HepG2 (cell line): ENCODE measurements at regions of chr12 and their contacts with region 1.

Region 1: GRCh38 chr12:24039113-24039525 is 89.6 kb upstream of the SOX5 start:
- DNase-seq: peak; percentile 96
- ATAC-seq: peak; percentile 81
- H3K4me3 ChIP-seq: peak overlapping the region in 2 of 3 experiments; percentile 62 to 65; a peak in 3 of 6 replicates
- H3K27ac ChIP-seq: peak overlapping the region; percentile 94
- H3K4me1 ChIP-seq: peaks cover 94% of the 10 kb centered on the region
- H3K27me3 ChIP-seq: no peaks in the 10 kb centered on the region
- CTCF ChIP-seq: no peak
- EP300 ChIP-seq: peak in 1 of 2 experiments; percentile 96; a peak in 2 of 4 replicates
- POLR2A ChIP-seq: no peak
- RAD21 ChIP-seq: no peak

Region 2: DNA sequence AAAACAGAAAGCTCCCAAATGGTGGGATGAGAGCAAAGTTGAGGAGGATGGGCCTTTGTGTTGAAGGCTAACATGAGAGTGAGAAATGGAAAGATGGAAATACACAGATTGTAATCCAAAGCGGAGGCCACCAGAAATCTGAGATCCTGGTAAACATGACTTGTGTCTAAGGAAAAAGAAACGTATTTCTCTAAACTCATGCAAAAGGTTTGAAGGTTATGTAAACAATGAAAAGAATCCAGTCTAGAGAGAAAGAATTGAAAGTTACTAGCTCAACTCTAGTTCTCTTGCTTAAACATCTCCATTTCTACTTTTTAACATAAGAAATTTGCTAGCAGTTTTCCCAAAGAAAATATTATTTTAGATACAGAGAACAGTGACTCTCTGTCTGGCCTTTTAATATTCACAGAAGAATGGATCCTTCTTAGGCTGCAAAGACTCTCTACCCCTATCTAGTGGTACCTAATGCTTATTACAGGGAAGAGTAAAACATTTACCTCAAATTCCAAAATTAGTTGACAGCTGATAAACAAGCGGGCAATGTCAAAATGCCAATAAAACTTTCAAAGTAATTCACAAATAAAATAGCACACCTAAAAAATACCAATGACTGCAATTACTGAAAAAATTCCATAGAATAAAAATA is 13.8 kb before region 1 on chr12:
- CTCF ChIA-PET with region 1: no interaction called
- POLR2A ChIA-PET with region 1: interaction called, 5 read pairs
- in situ Hi-C with region 1: no loop called
- intact Hi-C with region 1: loop called (anchors 2 kb)
- DNase-seq: peak; percentile 84
- ATAC-seq: peak; percentile 87
- H3K4me3 ChIP-seq: peak overlapping the region in 2 of 3 experiments; percentile 50 to 53; a peak in 2 of 6 replicates
- H3K27ac ChIP-seq: peak overlapping the region; percentile 72
- H3K4me1 ChIP-seq: peaks cover 71% of the 10 kb centered on the region
- H3K27me3 ChIP-seq: no peaks in the 10 kb centered on the region; a peak in 1 of 5 replicates
- CTCF ChIP-seq: peak; percentile 54
- EP300 ChIP-seq: peak in 1 of 2 experiments; percentile 74; a peak in 2 of 4 replicates
- POLR2A ChIP-seq: no peak
- RAD21 ChIP-seq: no peak

Region 3: DNA sequence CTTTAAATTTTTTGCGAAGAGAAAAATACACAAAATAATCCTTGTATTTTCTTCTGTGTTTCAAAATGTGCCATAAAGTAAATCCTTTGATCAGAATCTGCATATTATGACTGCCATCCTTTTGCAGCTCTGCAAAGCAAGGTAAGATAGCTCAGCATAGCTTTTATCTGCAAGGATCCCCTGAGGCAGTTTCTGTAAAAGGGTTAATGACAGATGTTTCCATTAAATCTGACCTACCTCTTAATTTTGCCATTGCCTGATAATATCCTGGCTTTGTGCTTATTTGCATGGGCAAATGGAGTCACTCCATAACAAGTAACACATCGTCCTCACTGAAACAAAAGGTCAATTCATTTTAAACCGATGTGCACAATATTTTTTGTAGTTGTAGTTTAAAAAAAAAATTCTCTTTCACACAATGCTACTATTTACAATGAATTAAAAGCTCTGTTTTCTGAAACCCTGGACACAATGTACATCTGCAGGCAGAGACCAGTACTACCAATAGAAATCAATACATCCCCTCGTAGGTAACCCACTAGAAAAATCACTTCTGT is 18.9 kb after region 1 on chr12:
- CTCF ChIA-PET with region 1: no interaction called
- POLR2A ChIA-PET with region 1: no interaction called
- in situ Hi-C with region 1: no loop called
- intact Hi-C with region 1: no loop called
- DNase-seq: no peak
- ATAC-seq: no peak
- H3K4me3 ChIP-seq: no peak overlapping the region
- H3K27ac ChIP-seq: no peak overlapping the region
- H3K4me1 ChIP-seq: peaks cover 12% of the 10 kb centered on the region
- H3K27me3 ChIP-seq: no peaks in the 10 kb centered on the region
- CTCF ChIP-seq: no peak
- EP300 ChIP-seq: no peak
- POLR2A ChIP-seq: no peak
- RAD21 ChIP-seq: no peak

Region 4: DNA sequence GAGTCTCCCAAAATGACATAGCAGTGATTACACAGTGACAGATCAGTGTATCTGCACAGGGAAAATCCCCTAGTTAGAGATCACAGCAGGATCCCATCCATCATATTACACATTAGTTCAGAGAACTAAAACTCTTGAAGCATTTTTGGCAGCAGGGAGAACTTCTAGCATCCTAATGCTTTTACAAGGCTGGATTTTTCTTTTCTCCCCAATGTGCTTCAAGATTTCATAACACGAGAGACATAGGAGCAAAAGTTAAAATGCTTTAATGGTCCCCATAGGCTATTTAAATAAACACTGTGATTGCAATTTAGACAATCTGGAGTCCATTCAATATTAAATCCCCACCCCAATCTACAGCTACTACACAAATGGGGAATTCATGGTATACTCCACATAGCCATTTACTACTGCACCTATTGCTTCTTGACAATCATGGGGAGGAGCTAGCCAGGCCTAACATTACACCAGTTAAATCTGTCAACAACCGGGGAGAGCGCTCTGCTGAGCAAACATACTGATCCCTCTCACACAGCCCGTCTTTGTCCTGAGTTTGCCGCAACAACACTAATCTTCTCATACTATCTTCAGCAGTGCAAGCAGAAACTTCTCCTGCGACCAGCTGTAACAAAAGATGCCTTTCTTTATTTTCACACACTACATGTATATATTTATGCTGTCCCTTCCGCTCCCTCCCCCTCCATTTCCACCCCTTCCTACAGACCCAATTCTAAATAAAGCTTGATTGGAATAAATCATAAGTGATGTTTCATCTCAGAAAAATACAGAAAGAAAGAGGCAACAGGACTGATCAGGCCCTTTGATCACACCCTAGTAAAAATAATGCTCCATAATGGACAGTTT is 30.6 kb after region 1 on chr12:
- CTCF ChIA-PET with region 1: no interaction called
- POLR2A ChIA-PET with region 1: interaction called, 11 read pairs
- in situ Hi-C with region 1: no loop called
- intact Hi-C with region 1: loop called (anchors 1 kb)
- DNase-seq: peak; percentile 98
- ATAC-seq: peak; percentile 100
- H3K4me3 ChIP-seq: peak overlapping the region in 2 of 3 experiments; percentile 8 to 41; a peak in 1 of 6 replicates
- H3K27ac ChIP-seq: peak overlapping the region; percentile 92
- H3K4me1 ChIP-seq: peaks cover 75% of the 10 kb centered on the region
- H3K27me3 ChIP-seq: no peaks in the 10 kb centered on the region
- CTCF ChIP-seq: 0 out of 2 replicates have a peak, but pooled peaks have one; percentile 7
- EP300 ChIP-seq: peak; percentile 34 to 96; a peak in 2 of 4 replicates
- POLR2A ChIP-seq: peak; percentile 33 to 55; a peak in 2 of 4 replicates
- RAD21 ChIP-seq: peak; percentile 20; the same call in 1 of the 2 replicates

Region 5: GRCh38 chr12:24078318-24078765 is 39.2 kb after region 1 on chr12:
- CTCF ChIA-PET with region 1: no interaction called
- POLR2A ChIA-PET with region 1: interaction called, 6 read pairs
- in situ Hi-C with region 1: no loop called
- intact Hi-C with region 1: loop called (anchors 1 kb)
- DNase-seq: peak; percentile 96
- ATAC-seq: peak; percentile 98
- H3K4me3 ChIP-seq: peak overlapping the region in 2 of 3 experiments; percentile 24 to 42; a peak in 1 of 6 replicates
- H3K27ac ChIP-seq: peak overlapping the region; percentile 79
- H3K4me1 ChIP-seq: peaks cover 85% of the 10 kb centered on the region
- H3K27me3 ChIP-seq: no peaks in the 10 kb centered on the region
- CTCF ChIP-seq: no peak
- EP300 ChIP-seq: peak; percentile 48 to 95; a peak in 2 of 4 replicates
- POLR2A ChIP-seq: peak; percentile 42 to 66; a peak in 3 of 4 replicates
- RAD21 ChIP-seq: no peak